Transverse colon (tissue), 4 donors: ENCODE measurements at regions of chr10 and their contacts with region 1.

Region 1: DNA sequence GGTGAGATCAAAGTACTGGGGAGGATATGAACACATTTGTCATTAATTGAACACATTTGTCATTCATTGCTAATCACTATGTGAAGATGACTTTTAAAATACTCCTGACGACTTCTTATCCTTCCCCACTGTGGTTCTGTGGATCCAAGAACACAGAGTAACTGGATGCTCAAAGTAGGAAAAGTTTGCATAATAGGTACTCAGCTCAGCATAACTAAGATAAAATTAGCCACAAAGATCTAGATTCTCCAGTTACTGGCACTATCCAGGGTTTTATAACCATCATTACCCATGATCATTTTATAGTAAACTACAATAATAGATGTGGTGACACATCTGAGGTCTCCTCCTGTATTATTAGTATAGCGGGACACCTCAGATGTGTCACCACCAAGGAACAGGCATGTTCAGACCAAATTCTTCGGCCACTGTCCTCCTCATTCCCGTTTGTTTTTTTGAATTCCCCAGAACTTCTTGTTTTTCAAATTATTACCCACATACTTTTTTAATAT is 163.6 kb upstream of the LRRTM3 start:
- DNase-seq: no peak
- H3K4me3 ChIP-seq: no peak overlapping the region
- H3K27ac ChIP-seq: no peak overlapping the region
- H3K4me1 ChIP-seq: no peaks in the 10 kb centered on the region
- H3K27me3 ChIP-seq: no peaks in the 10 kb centered on the region
- CTCF ChIP-seq: no peak
- EP300 ChIP-seq: no peak
- POLR2A ChIP-seq: no peak

Region 2: DNA sequence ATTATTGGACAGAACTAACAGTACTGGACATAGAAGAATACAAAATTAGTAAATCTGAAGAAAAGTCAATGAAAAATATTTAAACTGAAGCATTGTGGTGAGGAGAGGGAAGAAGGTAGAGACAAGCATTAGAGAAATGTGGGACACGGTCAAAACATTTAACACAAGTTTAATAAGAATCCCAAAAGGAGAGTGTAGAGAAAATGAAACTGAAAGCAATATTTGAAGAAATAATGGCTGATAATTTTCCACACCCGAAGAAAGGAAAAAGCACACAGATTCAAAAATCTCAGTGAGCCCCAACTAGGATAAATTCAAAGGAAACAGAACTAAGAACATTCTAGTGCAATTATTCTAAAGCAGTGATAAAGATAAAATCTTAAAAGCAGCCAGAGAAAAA is 37.2 kb after region 1 on chr10:
- in situ Hi-C with region 1: no loop called
- intact Hi-C with region 1: loop called (anchors 1 kb)
- DNase-seq: no peak
- H3K4me3 ChIP-seq: peak overlapping the region in 1 of 4 donors; percentile 9
- H3K27ac ChIP-seq: no peak overlapping the region
- H3K4me1 ChIP-seq: no peaks in the 10 kb centered on the region
- H3K27me3 ChIP-seq: no peaks in the 10 kb centered on the region
- CTCF ChIP-seq: no peak
- EP300 ChIP-seq: no peak
- POLR2A ChIP-seq: no peak